ENCODE measurements at regions of chr19 and their contacts with region 1.

Region 1: GRCh38 chr19:18349524-18350128 is 9.2 kb downstream of the PGPEP1 start:
- DNase-seq: peak; percentile 80
- ATAC-seq: peak; percentile 91
- H3K4me3 ChIP-seq: no peak overlapping the region
- H3K27ac ChIP-seq: no peak overlapping the region
- H3K4me1 ChIP-seq: peaks cover 3% of the 10 kb centered on the region
- H3K27me3 ChIP-seq: no peaks in the 10 kb centered on the region
- CTCF ChIP-seq: peak; percentile 87

Region 2: DNA sequence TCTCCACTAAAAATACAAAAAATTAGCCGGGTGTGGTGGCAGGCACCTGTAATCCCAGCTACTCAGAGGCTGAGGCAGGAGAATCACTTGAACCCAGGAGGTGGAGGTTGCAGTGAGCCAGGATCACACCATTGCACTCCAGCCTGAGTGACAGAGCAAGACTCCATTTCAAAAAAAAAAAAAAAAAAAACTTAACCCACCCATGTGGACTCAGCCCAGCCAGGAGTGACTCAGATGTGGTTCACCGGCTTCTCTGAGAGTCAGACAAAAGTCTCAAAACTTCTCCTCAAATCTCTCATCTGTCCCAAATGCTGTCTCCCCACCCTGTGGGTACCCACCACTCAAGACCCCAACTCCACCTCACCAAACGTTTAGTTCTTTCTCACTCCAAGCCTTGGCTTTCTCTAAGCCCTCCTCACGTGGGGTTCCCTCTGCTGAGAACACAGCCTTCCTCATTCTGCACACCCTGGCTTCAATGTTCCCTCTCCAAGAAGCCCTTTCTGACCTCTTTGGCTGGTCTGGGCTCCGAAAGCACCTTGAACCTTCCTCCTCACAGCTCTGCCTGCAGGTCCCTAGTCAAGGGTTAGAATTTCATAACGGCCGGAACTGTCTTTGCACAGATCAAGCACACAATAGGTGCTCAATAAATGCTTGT is 134.7 kb before region 1 on chr19:
- intact Hi-C with region 1: no loop called
- DNase-seq: no peak
- ATAC-seq: no peak
- H3K4me3 ChIP-seq: no peak overlapping the region
- H3K27ac ChIP-seq: no peak overlapping the region
- H3K4me1 ChIP-seq: no peaks in the 10 kb centered on the region
- H3K27me3 ChIP-seq: no peaks in the 10 kb centered on the region
- CTCF ChIP-seq: no peak

Region 3: GRCh38 chr19:18294108-18294851 is 55.3 kb before region 1 on chr19:
- intact Hi-C with region 1: no loop called
- DNase-seq: no peak
- ATAC-seq: no peak
- H3K4me3 ChIP-seq: no peak overlapping the region
- H3K27ac ChIP-seq: peak overlapping the region; percentile 8
- H3K4me1 ChIP-seq: peaks cover 14% of the 10 kb centered on the region
- H3K27me3 ChIP-seq: no peaks in the 10 kb centered on the region
- CTCF ChIP-seq: no peak

Region 4: DNA sequence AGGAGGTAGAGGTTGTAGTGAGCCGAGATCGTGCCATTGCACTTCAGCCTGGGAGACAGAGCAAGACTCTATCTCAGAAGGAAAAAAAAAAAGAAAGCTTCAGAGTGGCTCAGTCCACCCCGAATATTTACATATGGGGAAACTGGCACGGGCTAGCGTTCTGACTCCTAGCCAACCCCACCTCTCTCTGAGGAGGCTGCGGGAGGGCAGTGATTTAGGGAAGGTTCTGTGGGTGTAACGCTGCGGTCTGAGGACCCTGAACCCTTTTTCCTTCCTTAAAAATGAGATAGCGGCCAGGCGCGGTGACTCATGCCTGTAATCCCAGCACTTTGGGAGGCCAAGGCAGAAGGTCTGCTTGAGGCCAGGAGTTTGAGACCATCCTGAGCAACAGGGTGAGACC is 42.8 kb after region 1 on chr19:
- intact Hi-C with region 1: loop called (anchors 5 kb)
- DNase-seq: peak; percentile 80
- ATAC-seq: peak; percentile 68
- H3K4me3 ChIP-seq: peak overlapping the region; percentile 32
- H3K27ac ChIP-seq: peak overlapping the region; percentile 18
- H3K4me1 ChIP-seq: peaks cover 11% of the 10 kb centered on the region
- H3K27me3 ChIP-seq: peaks cover 6% of the 10 kb centered on the region
- CTCF ChIP-seq: no peak

Region 5: DNA sequence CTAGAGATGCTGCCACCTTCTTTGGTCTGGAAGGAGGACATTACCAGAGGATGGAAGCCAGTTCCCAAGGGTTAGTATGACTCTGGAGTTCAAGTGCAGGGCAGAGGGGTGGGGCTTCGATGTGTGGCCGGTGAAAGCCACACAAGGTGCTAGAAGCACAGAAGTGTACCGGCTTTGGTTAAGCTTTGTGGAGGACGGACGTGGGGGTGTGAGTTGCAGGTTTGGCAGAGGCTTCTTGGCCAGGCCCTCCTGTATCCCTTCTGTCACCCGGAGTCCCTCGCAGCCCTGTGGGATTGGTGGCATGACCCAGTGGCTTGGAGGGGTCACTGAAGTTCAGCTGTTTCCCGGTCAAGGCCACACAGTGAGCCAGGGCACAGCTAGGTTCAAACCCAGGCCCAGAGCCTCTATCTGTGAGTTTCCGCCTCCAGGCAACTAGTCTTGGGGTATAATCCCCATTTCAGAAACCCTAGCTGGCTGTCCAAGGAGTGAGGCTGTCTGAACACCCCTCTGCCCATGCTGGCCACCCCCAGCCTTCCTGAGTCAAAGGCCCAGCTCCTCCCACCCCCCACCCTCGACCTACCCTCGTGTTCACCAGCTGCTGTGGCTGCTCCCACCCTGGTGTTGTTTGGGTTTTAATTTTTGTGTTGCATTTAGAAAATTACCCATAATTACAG is 65.0 kb after region 1 on chr19:
- intact Hi-C with region 1: loop called (anchors 5 kb)
- DNase-seq: peak; percentile 64
- ATAC-seq: no peak
- H3K4me3 ChIP-seq: peak overlapping the region; percentile 36
- H3K27ac ChIP-seq: peak overlapping the region; percentile 92
- H3K4me1 ChIP-seq: peaks cover 46% of the 10 kb centered on the region
- H3K27me3 ChIP-seq: no peaks in the 10 kb centered on the region
- CTCF ChIP-seq: no peak